HepG2 (cell line): ENCODE measurements at regions of chr16 and their contacts with region 1.

Region 1: GRCh38 chr16:11797166-11797956 is at the start of gene ZC3H7A:
- DNase-seq: peak; percentile 98
- ATAC-seq: peak; percentile 96
- H3K4me3 ChIP-seq: peak within 1 kb of the TSS; percentile 79 to 100 (median 91)
- H3K27ac ChIP-seq: peak within 1 kb of the TSS; percentile 85
- H3K4me1 ChIP-seq: peaks cover 78% of the 10 kb centered on the region
- H3K27me3 ChIP-seq: no peaks in the 10 kb centered on the region; a peak in 1 of 5 replicates
- CTCF ChIP-seq: peak; percentile 80
- EP300 ChIP-seq: 0 out of 4 replicates have a peak, but pooled peaks of 1 of the 2 experiments have one; percentile 5
- POLR2A ChIP-seq: peak; percentile 100
- RAD21 ChIP-seq: peak; percentile 90
- total RNA-seq, gene ZC3H7A: 29.2 and 51.5 TPM in 2 replicates

Region 2: GRCh38 chr16:10408824-10409381 is 1388.5 kb before region 1 on chr16:
- CTCF ChIA-PET with region 1: no interaction called
- POLR2A ChIA-PET with region 1: no interaction called
- in situ Hi-C with region 1: no loop called
- intact Hi-C with region 1: no loop called
- DNase-seq: peak; percentile 38
- ATAC-seq: no peak
- H3K4me3 ChIP-seq: no peak overlapping the region
- H3K27ac ChIP-seq: no peak overlapping the region
- H3K4me1 ChIP-seq: peaks cover 50% of the 10 kb centered on the region
- H3K27me3 ChIP-seq: no peaks in the 10 kb centered on the region
- CTCF ChIP-seq: no peak
- EP300 ChIP-seq: no peak
- POLR2A ChIP-seq: no peak
- RAD21 ChIP-seq: no peak

Region 3: DNA sequence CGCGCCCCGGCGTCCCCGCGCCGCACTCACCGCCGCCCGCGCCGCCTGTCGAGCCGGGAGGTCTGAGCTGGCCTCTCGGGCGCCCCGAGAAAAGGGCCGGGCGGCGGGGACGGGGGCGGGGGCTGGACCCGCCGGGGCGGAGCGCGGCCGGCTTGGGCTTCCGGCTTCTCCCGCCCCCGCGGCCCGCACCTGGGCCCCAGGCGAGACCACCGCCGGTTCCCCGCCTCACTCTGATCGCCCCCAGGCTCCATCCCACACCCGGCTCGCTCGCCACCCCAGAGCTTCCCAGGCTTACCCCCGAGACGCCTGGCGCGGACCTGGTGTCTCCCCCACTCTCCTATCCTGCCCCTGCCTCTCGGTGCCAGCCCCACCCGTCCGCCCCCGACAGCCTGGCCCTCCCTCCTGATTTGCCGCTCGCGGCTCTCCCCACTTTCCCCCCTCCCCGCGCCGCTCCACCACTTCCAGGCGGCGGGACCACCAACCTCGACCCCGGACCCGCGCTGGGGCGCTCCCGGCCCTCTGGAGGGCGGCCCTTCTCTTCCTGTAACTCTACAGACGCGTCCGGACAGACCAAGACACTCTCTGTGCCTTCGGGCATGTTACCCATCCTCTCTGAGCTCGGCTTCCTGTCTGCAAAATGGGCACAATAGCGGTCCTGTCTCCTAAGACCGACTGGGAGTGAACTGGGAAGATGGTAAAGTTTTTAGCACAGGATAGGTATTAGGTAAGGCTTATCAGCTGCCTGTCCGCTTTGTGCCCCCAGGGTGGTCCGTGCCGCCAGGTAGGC is 210.3 kb before region 1 on chr16 and contains the start of gene LITAF:
- CTCF ChIA-PET with region 1: no interaction called
- POLR2A ChIA-PET with region 1: interaction called, 14 read pairs
- in situ Hi-C with region 1: no loop called
- intact Hi-C with region 1: loop called (anchors 10 kb)
- DNase-seq: no peak
- ATAC-seq: peak; percentile 80
- H3K4me3 ChIP-seq: peak within 1 kb of the TSS; percentile 73 to 96 (median 96)
- H3K27ac ChIP-seq: peak within 1 kb of the TSS; percentile 57
- H3K4me1 ChIP-seq: peaks cover 47% of the 10 kb centered on the region
- H3K27me3 ChIP-seq: peaks cover 0 to 21% of the 10 kb centered on the region in 2 experiments; a peak in 2 of 5 replicates
- CTCF ChIP-seq: peak; percentile 58
- EP300 ChIP-seq: no peak; a peak in 1 of 4 replicates
- POLR2A ChIP-seq: peak; percentile 42 to 83; a peak in 3 of 4 replicates
- RAD21 ChIP-seq: no peak
- total RNA-seq, gene LITAF: 141 and 186 TPM in 2 replicates

Region 4: GRCh38 chr16:11734025-11734652 is 63.2 kb before region 1 on chr16:
- CTCF ChIA-PET with region 1: no interaction called
- POLR2A ChIA-PET with region 1: interaction called, 12 read pairs
- in situ Hi-C with region 1: no loop called
- intact Hi-C with region 1: no loop called
- DNase-seq: no peak
- ATAC-seq: peak; percentile 16; the same call in 1 of the 3 replicates
- H3K4me3 ChIP-seq: no peak overlapping the region
- H3K27ac ChIP-seq: no peak overlapping the region
- H3K4me1 ChIP-seq: peaks cover 80% of the 10 kb centered on the region
- H3K27me3 ChIP-seq: no peaks in the 10 kb centered on the region
- CTCF ChIP-seq: no peak
- EP300 ChIP-seq: no peak
- POLR2A ChIP-seq: no peak
- RAD21 ChIP-seq: no peak

Region 5: DNA sequence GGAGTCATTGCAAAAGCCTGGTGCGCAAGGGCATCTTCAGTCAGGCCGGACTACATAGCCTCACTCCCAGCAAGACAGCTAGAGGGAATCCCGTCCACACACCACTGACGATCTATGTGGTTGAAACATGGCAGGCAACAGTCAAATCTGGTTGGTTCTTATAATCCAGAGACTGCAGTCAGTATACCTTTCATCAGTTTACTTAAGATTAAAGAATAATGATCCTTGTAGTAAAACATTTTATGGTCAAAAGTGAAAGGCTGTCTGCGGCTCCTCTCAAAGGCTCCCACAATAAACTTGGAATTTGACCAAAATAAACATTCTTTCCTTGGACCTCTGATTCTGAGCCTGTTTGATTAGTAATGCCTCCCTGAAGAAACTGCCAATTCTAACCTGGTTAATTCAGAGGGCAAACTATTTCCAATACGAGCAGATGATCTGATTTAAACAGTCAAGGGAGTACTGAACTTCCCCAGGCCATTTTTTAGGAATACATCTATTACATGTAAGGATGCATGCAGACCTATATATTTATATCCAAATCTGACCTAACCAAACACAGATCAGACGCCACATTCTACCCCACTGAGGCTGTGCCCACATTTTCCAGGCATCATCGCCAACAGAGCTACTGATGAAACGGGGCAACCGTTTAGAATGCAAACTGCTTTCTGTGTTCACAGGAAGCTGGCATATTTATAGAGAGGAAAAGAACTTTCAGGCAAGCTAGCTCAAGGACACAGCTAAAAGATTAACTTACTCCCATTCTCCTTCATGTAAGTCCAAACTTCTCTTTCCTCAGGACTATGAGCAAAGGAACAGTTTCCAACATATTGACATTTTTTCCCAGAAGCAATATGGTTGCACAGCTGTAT is 39.5 kb before region 1 on chr16:
- CTCF ChIA-PET with region 1: no interaction called
- POLR2A ChIA-PET with region 1: interaction called, 25 read pairs
- in situ Hi-C with region 1: no loop called
- intact Hi-C with region 1: no loop called
- DNase-seq: peak; percentile 32
- ATAC-seq: peak; percentile 58
- H3K4me3 ChIP-seq: no peak overlapping the region
- H3K27ac ChIP-seq: peak overlapping the region; percentile 43
- H3K4me1 ChIP-seq: peaks cover 67% of the 10 kb centered on the region
- H3K27me3 ChIP-seq: no peaks in the 10 kb centered on the region
- CTCF ChIP-seq: no peak
- EP300 ChIP-seq: peak in 1 of 2 experiments; percentile 10; a peak in 1 of 4 replicates
- POLR2A ChIP-seq: no peak
- RAD21 ChIP-seq: no peak

Region 6: DNA sequence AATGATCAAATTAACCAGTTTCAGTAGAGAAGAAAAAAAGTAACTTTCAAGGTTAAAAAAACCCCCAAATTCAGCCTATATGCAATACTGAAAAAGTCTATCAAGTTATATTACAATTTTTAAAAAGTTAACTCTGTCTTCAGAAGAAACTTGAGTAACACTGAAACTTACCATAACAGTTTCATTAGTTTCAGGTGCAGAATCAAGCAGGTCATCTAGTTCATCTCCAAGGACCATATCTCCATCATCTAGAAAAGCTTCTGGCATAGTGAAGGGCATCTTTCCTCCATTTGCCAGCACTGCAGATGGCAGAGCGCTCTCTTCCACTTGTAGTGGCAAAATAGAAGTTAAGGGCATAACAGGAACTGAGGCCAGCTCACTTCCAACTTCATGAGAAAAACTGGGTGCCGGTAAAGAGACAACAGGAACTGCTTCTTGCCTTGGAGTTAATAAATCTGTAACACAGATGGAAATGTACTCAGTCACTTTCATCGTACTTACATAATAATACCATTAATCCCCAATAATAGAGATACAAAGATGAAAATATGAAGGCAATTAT is 23.2 kb before region 1 on chr16:
- CTCF ChIA-PET with region 1: no interaction called
- POLR2A ChIA-PET with region 1: interaction called, 12 read pairs
- in situ Hi-C with region 1: no loop called
- intact Hi-C with region 1: no loop called
- DNase-seq: no peak
- ATAC-seq: no peak
- H3K4me3 ChIP-seq: no peak overlapping the region
- H3K27ac ChIP-seq: no peak overlapping the region
- H3K4me1 ChIP-seq: no peaks in the 10 kb centered on the region
- H3K27me3 ChIP-seq: no peaks in the 10 kb centered on the region
- CTCF ChIP-seq: no peak
- EP300 ChIP-seq: no peak
- POLR2A ChIP-seq: no peak
- RAD21 ChIP-seq: no peak

Region 7: GRCh38 chr16:11819798-11820197 is 22.4 kb after region 1 on chr16:
- CTCF ChIA-PET with region 1: no interaction called
- POLR2A ChIA-PET with region 1: interaction called, 65 read pairs
- in situ Hi-C with region 1: no loop called
- intact Hi-C with region 1: no loop called
- DNase-seq: no peak
- ATAC-seq: no peak
- H3K4me3 ChIP-seq: no peak overlapping the region
- H3K27ac ChIP-seq: no peak overlapping the region
- H3K4me1 ChIP-seq: peaks cover 43% of the 10 kb centered on the region
- H3K27me3 ChIP-seq: 0 out of 5 replicates have a peak, but pooled peaks cover 0 to 5% of the 10 kb centered on the region in 2 experiments
- CTCF ChIP-seq: no peak
- EP300 ChIP-seq: no peak
- POLR2A ChIP-seq: no peak
- RAD21 ChIP-seq: no peak

Region 8: GRCh38 chr16:11915644-11916523 is 118.5 kb after region 1 on chr16 and contains the start of gene GSPT1:
- CTCF ChIA-PET with region 1: no interaction called
- POLR2A ChIA-PET with region 1: interaction called, 15 read pairs
- in situ Hi-C with region 1: no loop called
- intact Hi-C with region 1: loop called (anchors 5 kb)
- DNase-seq: peak; percentile 99
- ATAC-seq: peak; percentile 92
- H3K4me3 ChIP-seq: peak within 1 kb of the TSS; percentile 74 to 98 (median 97)
- H3K27ac ChIP-seq: peak within 1 kb of the TSS; percentile 94
- H3K4me1 ChIP-seq: peaks cover 48% of the 10 kb centered on the region
- H3K27me3 ChIP-seq: no peaks in the 10 kb centered on the region; a peak in 1 of 5 replicates
- CTCF ChIP-seq: peak; percentile 52
- EP300 ChIP-seq: peak; percentile 8 to 53; a peak in 1 of 4 replicates
- POLR2A ChIP-seq: peak; percentile 80 to 97
- RAD21 ChIP-seq: peak; percentile 52
- total RNA-seq, gene GSPT1: 316 and 449 TPM in 2 replicates